ENCODE measurements at regions of chr22 and their contacts with region 1.

Region 1: GRCh38 chr22:24803011-24803542 is 2.9 kb upstream of the SGSM1 start:
- DNase-seq: peak; percentile 55
- ATAC-seq: no peak
- H3K4me3 Mint-ChIP-seq: no peak overlapping the region
- H3K27ac Mint-ChIP-seq: no peak overlapping the region
- H3K4me1 Mint-ChIP-seq: peaks cover 22% of the 10 kb centered on the region
- H3K27me3 Mint-ChIP-seq: peaks cover 15% of the 10 kb centered on the region

Region 2: GRCh38 chr22:24789516-24789915 is 13.6 kb before region 1 on chr22:
- CTCF ChIA-PET with region 1: interaction called, 11 read pairs
- DNase-seq: no peak
- ATAC-seq: no peak
- H3K4me3 Mint-ChIP-seq: no peak overlapping the region
- H3K27ac Mint-ChIP-seq: no peak overlapping the region
- H3K4me1 Mint-ChIP-seq: no peaks in the 10 kb centered on the region
- H3K27me3 Mint-ChIP-seq: peaks cover 11% of the 10 kb centered on the region

Region 3: GRCh38 chr22:24848559-24849168 is 45.6 kb after region 1 on chr22:
- CTCF ChIA-PET with region 1: interaction called, 15 read pairs
- DNase-seq: no peak
- ATAC-seq: no peak
- H3K4me3 Mint-ChIP-seq: no peak overlapping the region
- H3K27ac Mint-ChIP-seq: no peak overlapping the region
- H3K4me1 Mint-ChIP-seq: peaks cover 22% of the 10 kb centered on the region
- H3K27me3 Mint-ChIP-seq: peaks cover 10% of the 10 kb centered on the region